ENCODE measurements at regions of chr7 and their contacts with region 1.

Region 1: GRCh38 chr7:35617041-35617440 is 77.9 kb downstream of the HERPUD2 start:
- DNase-seq: no peak
- CTCF ChIP-seq: no peak

Region 2: GRCh38 chr7:35599645-35600044 is 17.4 kb before region 1 on chr7:
- CTCF ChIA-PET with region 1: interaction called, 10 read pairs
- POLR2A ChIA-PET with region 1: no interaction called
- DNase-seq: no peak
- CTCF ChIP-seq: no peak